ENCODE measurements at regions of chr2 and their contacts with region 1.

Region 1: GRCh38 chr2:195808189-195808588 is 151.2 kb downstream of the SLC39A10 start:
- DNase-seq: no peak
- H3K4me3 Mint-ChIP-seq: no peak overlapping the region
- H3K27ac Mint-ChIP-seq: no peak overlapping the region
- H3K4me1 Mint-ChIP-seq: no peaks in the 10 kb centered on the region
- H3K27me3 Mint-ChIP-seq: no peaks in the 10 kb centered on the region

Region 2: GRCh38 chr2:195486987-195487644 is 321.1 kb before region 1 on chr2:
- CTCF ChIA-PET with region 1: no interaction called
- intact Hi-C with region 1: no loop called
- DNase-seq: peak; percentile 34
- H3K4me3 Mint-ChIP-seq: no peak overlapping the region
- H3K27ac Mint-ChIP-seq: peak overlapping the region; percentile 64
- H3K4me1 Mint-ChIP-seq: peaks cover 16% of the 10 kb centered on the region
- H3K27me3 Mint-ChIP-seq: no peaks in the 10 kb centered on the region

Region 3: GRCh38 chr2:195984923-195985726 is 176.9 kb after region 1 on chr2:
- CTCF ChIA-PET with region 1: no interaction called
- intact Hi-C with region 1: no loop called
- DNase-seq: no peak
- H3K4me3 Mint-ChIP-seq: no peak overlapping the region
- H3K27ac Mint-ChIP-seq: no peak overlapping the region
- H3K4me1 Mint-ChIP-seq: peaks cover 3% of the 10 kb centered on the region
- H3K27me3 Mint-ChIP-seq: no peaks in the 10 kb centered on the region

Region 4: DNA sequence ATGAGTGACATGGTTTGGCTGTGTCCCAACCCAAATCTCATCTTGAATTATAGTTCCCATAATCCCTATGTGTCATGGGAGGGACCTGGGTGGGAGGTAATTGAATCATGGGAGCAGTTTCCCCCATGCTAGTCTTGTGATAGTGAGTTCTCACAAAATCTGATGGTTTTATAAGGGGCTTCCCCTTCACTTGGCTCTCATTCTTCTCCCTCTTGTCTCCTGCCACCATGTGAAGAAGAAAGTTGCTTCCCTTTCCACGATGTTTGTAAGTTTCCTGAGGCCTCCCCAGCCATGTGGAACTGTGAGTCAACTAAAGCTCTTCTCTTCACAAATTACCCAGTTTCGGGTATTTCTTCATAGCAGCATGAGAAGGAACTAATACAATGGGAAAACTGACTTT is 246.4 kb after region 1 on chr2:
- CTCF ChIA-PET with region 1: no interaction called
- intact Hi-C with region 1: loop called (anchors 5 kb)
- DNase-seq: no peak
- H3K4me3 Mint-ChIP-seq: no peak overlapping the region
- H3K27ac Mint-ChIP-seq: no peak overlapping the region
- H3K4me1 Mint-ChIP-seq: no peaks in the 10 kb centered on the region
- H3K27me3 Mint-ChIP-seq: no peaks in the 10 kb centered on the region